ENCODE measurements at regions of chr1 and their contacts with region 1.

Region 1: GRCh38 chr1:160664573-160665051 is 17.8 kb upstream of the SLAMF1 start:
- DNase-seq: no peak
- H3K4me3 ChIP-seq: no peak overlapping the region
- H3K27ac ChIP-seq: peak overlapping the region; percentile 11
- H3K4me1 ChIP-seq: no peaks in the 10 kb centered on the region
- H3K27me3 ChIP-seq: no peaks in the 10 kb centered on the region
- CTCF ChIP-seq: no peak

Region 2: DNA sequence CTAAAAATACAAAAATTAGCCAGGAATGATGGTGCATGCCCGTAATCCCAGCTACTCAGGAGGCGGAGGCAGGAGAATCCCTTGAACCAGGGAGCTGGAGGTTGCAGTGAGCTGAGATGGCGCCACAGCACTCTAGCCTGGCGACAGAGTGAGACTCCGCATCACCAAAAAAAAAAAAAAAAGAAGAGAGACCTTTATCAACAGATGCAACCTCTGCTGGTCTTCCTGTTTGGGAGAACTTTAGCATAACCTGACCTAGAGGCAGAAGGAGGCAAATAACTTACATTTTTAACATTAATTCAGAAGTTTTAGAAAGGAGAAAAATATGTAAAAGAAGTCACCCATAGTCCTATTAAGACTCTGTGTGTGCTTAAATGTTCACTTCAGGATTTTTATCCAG is 50.2 kb before region 1 on chr1:
- intact Hi-C with region 1: loop called (anchors 5 kb)
- DNase-seq: no peak
- H3K4me3 ChIP-seq: no peak overlapping the region
- H3K27ac ChIP-seq: no peak overlapping the region
- H3K4me1 ChIP-seq: no peaks in the 10 kb centered on the region
- H3K27me3 ChIP-seq: no peaks in the 10 kb centered on the region
- CTCF ChIP-seq: no peak

Region 3: DNA sequence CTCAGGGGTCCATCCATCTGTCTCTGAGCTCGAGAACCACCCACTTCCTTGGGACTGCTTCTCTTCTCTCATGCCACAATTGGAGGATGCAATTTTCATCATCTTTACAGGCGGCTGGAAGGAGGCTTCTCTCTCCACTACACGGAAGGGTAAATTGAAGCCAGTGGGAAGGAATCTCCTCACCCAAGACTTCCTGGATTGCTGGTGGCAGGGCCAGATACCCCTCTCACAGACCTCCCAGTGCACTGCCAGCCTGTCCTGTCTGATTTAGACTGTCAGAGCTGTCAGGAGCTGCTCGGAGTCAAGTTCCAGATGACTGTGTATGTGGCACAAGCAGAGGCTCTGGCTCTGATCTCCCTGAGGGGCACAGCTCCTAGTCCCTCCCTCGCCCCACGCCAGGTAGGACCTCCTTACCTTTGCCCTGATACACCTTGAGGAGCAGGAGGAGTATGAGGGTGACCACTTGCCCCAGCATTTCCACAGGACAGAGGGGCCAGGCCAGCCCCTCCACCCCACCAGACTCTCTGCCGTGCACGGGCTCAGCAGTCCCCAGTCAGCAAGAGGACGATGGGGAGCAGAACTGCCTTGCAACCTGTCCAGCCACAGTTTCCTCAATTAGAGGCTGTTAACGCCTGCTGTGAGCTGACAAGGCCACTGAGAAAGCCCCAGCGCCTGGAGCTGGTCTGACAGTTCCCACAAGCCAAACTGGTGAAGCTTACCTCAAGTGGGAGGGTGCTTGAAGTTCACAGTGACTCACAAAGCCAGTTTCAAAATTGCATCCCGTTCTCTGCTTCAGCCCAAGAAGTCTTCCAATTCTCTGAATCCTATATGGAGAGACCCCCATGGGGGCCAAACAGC is 197.8 kb after region 1 on chr1 and contains the start of gene CD244:
- intact Hi-C with region 1: no loop called
- DNase-seq: no peak
- H3K4me3 ChIP-seq: no peak within 1 kb of the TSS
- H3K27ac ChIP-seq: no peak within 1 kb of the TSS
- H3K4me1 ChIP-seq: no peaks in the 10 kb centered on the region
- H3K27me3 ChIP-seq: no peaks in the 10 kb centered on the region
- CTCF ChIP-seq: no peak
- total RNA-seq, gene CD244: 0.49 to 0.58 TPM

Measured in colonic mucosa (tissue), 4 donors.